K562 (cell line): ENCODE measurements at regions of chr5 and their contacts with region 1.

Region 1: GRCh38 chr5:62431735-62432620 is 19.4 kb downstream of the IPO11 start:
- DNase-seq: peak in 1 of 4 experiments; percentile 41
- ATAC-seq: peak; percentile 72
- H3K4me3 ChIP-seq: no peak overlapping the region
- H3K27ac ChIP-seq: peak overlapping the region; percentile 81
- H3K4me1 ChIP-seq: peaks cover 12 to 24% of the 10 kb centered on the region in 2 experiments
- H3K27me3 ChIP-seq: no peaks in the 10 kb centered on the region
- CTCF ChIP-seq: no peak
- EP300 ChIP-seq: no peak
- POLR2A ChIP-seq: no peak
- RAD21 ChIP-seq: no peak

Region 2: DNA sequence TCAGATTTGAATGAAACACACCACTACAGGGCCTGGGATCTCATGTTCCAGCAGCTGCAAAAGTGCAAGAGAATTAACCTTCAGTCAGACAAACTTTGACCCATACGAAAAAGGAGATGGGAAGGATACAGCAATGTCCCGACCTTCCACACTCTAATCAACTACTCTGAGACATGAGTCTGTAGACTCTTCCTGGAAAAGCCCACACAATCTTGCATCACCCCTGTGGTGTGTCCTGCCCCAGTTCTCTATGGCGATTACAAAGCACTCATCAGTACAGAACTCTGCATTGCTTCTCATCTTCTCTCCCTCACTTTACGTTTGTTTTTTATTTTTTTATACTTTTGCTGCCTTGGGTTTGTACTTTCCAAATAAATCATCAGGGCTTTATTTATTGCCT is 366.9 kb before region 1 on chr5:
- CTCF ChIA-PET with region 1: no interaction called
- POLR2A ChIA-PET with region 1: no interaction called
- in situ Hi-C with region 1: no loop called
- intact Hi-C with region 1: no loop called
- DNase-seq: no peak
- ATAC-seq: peak; percentile 69
- H3K4me3 ChIP-seq: no peak overlapping the region
- H3K27ac ChIP-seq: no peak overlapping the region
- H3K4me1 ChIP-seq: no peaks in the 10 kb centered on the region
- H3K27me3 ChIP-seq: no peaks in the 10 kb centered on the region
- CTCF ChIP-seq: no peak
- EP300 ChIP-seq: no peak
- POLR2A ChIP-seq: no peak
- RAD21 ChIP-seq: no peak

Region 3: GRCh38 chr5:62403434-62404250 is 28.3 kb before region 1 on chr5 and contains the start of gene DIMT1:
- CTCF ChIA-PET with region 1: no interaction called
- POLR2A ChIA-PET with region 1: interaction called, 21 read pairs
- in situ Hi-C with region 1: no loop called
- intact Hi-C with region 1: no loop called
- DNase-seq: peak; percentile 92 to 98 (median 94)
- ATAC-seq: peak; percentile 98
- H3K4me3 ChIP-seq: peak within 1 kb of the TSS; percentile 83
- H3K27ac ChIP-seq: peak within 1 kb of the TSS; percentile 89
- H3K4me1 ChIP-seq: peaks cover 7 to 11% of the 10 kb centered on the region in 2 experiments; a peak in 3 of 5 replicates
- H3K27me3 ChIP-seq: no peaks in the 10 kb centered on the region
- CTCF ChIP-seq: no peak
- EP300 ChIP-seq: no peak
- POLR2A ChIP-seq: peak; percentile 96
- RAD21 ChIP-seq: no peak; a peak in 1 of 4 replicates
- polyA plus RNA-seq, gene DIMT1: 28.9 to 39.9 TPM

Region 4: DNA sequence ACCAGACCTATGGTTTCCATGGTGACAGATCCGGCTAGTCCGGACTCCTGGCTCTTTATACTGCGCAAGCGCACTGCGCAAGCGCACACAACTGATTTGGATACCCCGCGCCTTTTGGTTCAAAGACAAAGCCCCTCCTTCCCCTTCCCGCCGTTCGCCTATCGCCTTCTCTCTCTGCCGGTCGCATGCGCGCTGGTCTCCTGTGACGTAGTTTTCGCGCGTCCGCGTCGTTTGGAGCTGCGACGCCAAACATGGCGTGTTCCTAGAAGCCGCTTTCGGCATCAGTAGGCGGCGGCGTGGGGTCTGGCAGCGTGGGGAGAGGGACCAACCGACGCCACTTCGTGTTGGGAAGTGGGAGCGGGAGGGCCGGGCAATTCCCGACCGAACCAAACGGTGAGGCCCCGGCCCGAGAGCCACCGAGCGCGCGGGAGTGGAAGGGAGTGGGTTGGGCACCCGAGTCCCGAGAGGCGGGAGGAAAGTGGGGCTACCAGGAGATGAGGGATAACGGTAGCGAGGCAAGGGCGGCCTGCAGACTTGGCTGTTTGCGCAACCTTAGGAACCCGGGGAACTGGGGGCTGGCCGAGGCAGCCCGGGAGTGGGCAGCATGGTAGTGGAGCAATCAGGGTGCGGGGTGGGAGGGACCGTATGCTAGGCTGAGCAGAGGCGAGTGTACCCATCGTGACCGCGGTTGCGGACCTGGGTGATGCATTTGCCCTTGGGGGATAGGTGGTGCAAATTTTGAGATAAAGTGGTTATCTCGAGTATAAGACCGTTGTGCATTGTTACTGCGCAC is 19.2 kb before region 1 on chr5 and contains the start of gene IPO11:
- CTCF ChIA-PET with region 1: no interaction called
- POLR2A ChIA-PET with region 1: interaction called, 31 read pairs
- in situ Hi-C with region 1: no loop called
- intact Hi-C with region 1: no loop called
- DNase-seq: peak; percentile 93 to 100 (median 96)
- ATAC-seq: peak; percentile 89
- H3K4me3 ChIP-seq: peak within 1 kb of the TSS; percentile 86
- H3K27ac ChIP-seq: peak within 1 kb of the TSS; percentile 87
- H3K4me1 ChIP-seq: peaks cover 21 to 24% of the 10 kb centered on the region in 2 experiments; a peak in 4 of 5 replicates
- H3K27me3 ChIP-seq: no peaks in the 10 kb centered on the region
- CTCF ChIP-seq: no peak
- EP300 ChIP-seq: peak; percentile 36; the same call in 1 of the 2 replicates
- POLR2A ChIP-seq: peak; percentile 96
- RAD21 ChIP-seq: no peak
- polyA plus RNA-seq, gene IPO11: 39.5 to 45.4 TPM

Region 5: DNA sequence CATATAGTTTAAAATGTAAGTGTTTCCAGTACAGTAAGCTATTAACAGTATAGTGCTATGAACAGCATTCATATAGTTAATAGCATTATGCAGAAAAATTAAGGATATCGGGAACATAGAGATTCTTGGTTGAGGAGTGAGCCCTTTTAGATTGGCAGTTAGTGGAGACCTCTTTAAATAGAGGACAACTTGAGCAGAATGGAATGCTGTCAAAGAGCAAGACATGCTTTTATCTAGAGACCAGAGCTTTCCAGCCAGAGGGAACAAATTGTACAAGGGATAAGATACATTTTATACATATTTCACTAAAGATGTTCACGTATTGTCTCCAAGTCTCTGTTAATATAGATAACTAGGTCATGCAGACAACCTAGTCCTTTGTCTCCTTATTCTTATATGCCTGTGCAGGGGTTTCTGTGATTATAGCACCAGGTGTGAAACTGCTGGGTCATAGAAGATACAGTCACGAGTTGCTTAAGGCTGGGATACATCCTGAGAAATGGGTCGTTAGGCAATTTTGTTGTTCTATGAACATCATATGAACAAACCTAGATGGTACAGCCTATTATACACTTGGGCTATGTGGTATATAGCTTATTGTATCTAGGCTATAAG is 13.4 kb before region 1 on chr5:
- CTCF ChIA-PET with region 1: no interaction called
- POLR2A ChIA-PET with region 1: interaction called, 31 read pairs
- in situ Hi-C with region 1: no loop called
- intact Hi-C with region 1: no loop called
- DNase-seq: peak in 1 of 4 experiments; percentile 40
- ATAC-seq: peak; percentile 11
- H3K4me3 ChIP-seq: no peak overlapping the region
- H3K27ac ChIP-seq: peak overlapping the region; percentile 25; the same call in 2 of the 3 replicates
- H3K4me1 ChIP-seq: peaks cover 36 to 65% of the 10 kb centered on the region in 2 experiments
- H3K27me3 ChIP-seq: no peaks in the 10 kb centered on the region; a peak in 1 of 5 replicates
- CTCF ChIP-seq: no peak
- EP300 ChIP-seq: no peak
- POLR2A ChIP-seq: no peak
- RAD21 ChIP-seq: no peak

Region 6: GRCh38 chr5:62448528-62448927 is 16.6 kb after region 1 on chr5:
- CTCF ChIA-PET with region 1: no interaction called
- POLR2A ChIA-PET with region 1: interaction called, 23 read pairs
- in situ Hi-C with region 1: no loop called
- intact Hi-C with region 1: no loop called
- DNase-seq: no peak
- ATAC-seq: no peak
- H3K4me3 ChIP-seq: no peak overlapping the region
- H3K27ac ChIP-seq: no peak overlapping the region
- H3K4me1 ChIP-seq: peaks cover 2 to 3% of the 10 kb centered on the region in 2 experiments; a peak in 1 of 5 replicates
- H3K27me3 ChIP-seq: no peaks in the 10 kb centered on the region
- CTCF ChIP-seq: no peak
- EP300 ChIP-seq: no peak
- POLR2A ChIP-seq: no peak
- RAD21 ChIP-seq: no peak